ENCODE measurements at regions of chr1 and their contacts with region 1.

Region 1: DNA sequence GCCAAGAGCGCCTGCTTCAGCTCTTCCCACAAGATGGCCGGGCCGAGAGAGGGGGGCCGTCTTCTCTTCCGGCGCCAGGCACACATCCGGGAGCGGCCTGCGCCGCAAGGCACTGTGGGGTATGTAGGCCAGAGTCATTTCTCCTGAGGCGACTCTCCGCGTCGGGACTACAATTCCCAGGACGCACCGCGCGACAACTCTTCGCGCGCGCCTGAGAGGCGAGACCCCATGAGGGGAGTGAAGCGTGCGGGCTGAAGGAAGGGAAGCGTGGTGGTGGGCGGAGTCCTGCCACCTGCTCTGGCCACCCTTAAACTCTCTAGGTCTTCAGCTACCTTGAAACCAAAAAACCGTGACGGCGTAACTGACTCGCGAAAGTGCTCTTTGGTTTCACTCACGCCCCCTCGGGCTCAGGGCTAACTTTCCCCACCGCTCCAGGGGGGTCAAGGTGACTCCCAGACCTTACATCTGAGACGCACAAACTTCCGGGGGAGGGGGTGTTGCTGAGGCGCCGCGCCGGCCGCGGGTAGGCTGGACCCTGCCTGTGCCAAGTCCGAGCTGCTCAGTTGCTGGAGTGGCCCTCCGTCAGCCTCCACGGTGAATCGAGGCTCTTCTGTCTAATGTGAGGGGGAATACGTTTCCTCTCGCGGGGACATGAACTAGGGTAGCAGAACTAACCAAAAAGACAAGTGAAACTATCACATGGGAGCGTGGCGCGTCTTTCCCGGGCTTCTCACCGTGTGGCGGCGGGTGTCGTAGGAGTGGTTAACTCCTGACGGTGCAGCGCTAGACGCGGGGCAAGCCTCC is at the start of gene SERBP1:
- DNase-seq: peak; percentile 89 to 99 (median 95)
- ATAC-seq: peak; percentile 84
- H3K4me3 ChIP-seq: peak within 1 kb of the TSS; percentile 86 to 94
- H3K4me3 Mint-ChIP-seq: peak within 1 kb of the TSS; percentile 92
- H3K27ac ChIP-seq: peak within 1 kb of the TSS; percentile 86 to 98
- H3K27ac Mint-ChIP-seq: peak within 1 kb of the TSS; percentile 95
- H3K4me1 ChIP-seq: peaks cover 31% of the 10 kb centered on the region
- H3K4me1 Mint-ChIP-seq: peaks cover 54% of the 10 kb centered on the region
- H3K27me3 ChIP-seq: no peaks in the 10 kb centered on the region
- H3K27me3 Mint-ChIP-seq: no peaks in the 10 kb centered on the region
- CTCF ChIP-seq: no peak
- total RNA-seq, gene SERBP1: 136 to 143 TPM

Region 2: DNA sequence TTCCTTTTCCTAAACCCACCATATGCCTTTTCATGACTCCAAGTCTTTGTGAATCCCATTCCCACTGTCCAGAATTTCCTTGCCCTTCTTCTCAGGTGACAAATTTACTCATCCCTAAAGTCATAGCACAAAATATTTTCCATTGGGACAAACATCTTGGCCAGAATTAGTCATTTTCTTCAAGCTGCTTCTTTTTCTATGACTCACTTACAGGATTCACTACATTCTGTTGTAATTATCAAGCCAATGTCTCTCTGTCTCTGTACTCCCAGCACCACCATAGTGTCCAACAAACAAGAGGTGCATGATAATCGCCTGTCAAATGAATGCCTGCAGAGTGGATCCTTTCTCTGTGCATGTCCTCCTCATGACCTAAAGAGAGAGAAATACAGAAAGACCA is 858.8 kb before region 1 on chr1:
- CTCF ChIA-PET with region 1: no interaction called
- POLR2A ChIA-PET with region 1: no interaction called
- intact Hi-C with region 1: no loop called
- DNase-seq: no peak
- ATAC-seq: no peak
- H3K4me3 ChIP-seq: no peak overlapping the region
- H3K4me3 Mint-ChIP-seq: no peak overlapping the region
- H3K27ac ChIP-seq: no peak overlapping the region
- H3K27ac Mint-ChIP-seq: no peak overlapping the region
- H3K4me1 ChIP-seq: no peaks in the 10 kb centered on the region
- H3K4me1 Mint-ChIP-seq: no peaks in the 10 kb centered on the region
- H3K27me3 ChIP-seq: no peaks in the 10 kb centered on the region
- H3K27me3 Mint-ChIP-seq: no peaks in the 10 kb centered on the region
- CTCF ChIP-seq: no peak

Region 3: GRCh38 chr1:66924756-66925557 is 505.6 kb before region 1 on chr1 and contains the starts of genes DNAI4 and MIER1:
- CTCF ChIA-PET with region 1: no interaction called
- POLR2A ChIA-PET with region 1: interaction called, 4 read pairs
- intact Hi-C with region 1: loop called (anchors 1 to 2 kb)
- DNase-seq: peak; percentile 93 to 98 (median 96)
- ATAC-seq: peak; percentile 91
- H3K4me3 ChIP-seq: peak within 1 kb of the TSS; percentile 80 to 99
- H3K4me3 Mint-ChIP-seq: peak within 1 kb of the TSS; percentile 96
- H3K27ac ChIP-seq: peak within 1 kb of the TSS; percentile 95 to 100
- H3K27ac Mint-ChIP-seq: peak within 1 kb of the TSS; percentile 93
- H3K4me1 ChIP-seq: peaks cover 25% of the 10 kb centered on the region
- H3K4me1 Mint-ChIP-seq: peaks cover 46% of the 10 kb centered on the region
- H3K27me3 ChIP-seq: no peaks in the 10 kb centered on the region
- H3K27me3 Mint-ChIP-seq: no peaks in the 10 kb centered on the region
- CTCF ChIP-seq: no peak
- total RNA-seq, gene DNAI4: 4.9 to 5.1 TPM
- total RNA-seq, gene MIER1: 94.5 to 96.5 TPM

Region 4: GRCh38 chr1:67053785-67054772 is 376.5 kb before region 1 on chr1 and contains the start of gene SLC35D1:
- CTCF ChIA-PET with region 1: no interaction called
- POLR2A ChIA-PET with region 1: interaction called, 4 read pairs
- intact Hi-C with region 1: loop called (anchors 2 kb)
- DNase-seq: peak; percentile 62 to 87 (median 83)
- ATAC-seq: peak; percentile 78
- H3K4me3 ChIP-seq: peak within 1 kb of the TSS; percentile 80 to 85
- H3K4me3 Mint-ChIP-seq: peak within 1 kb of the TSS; percentile 89
- H3K27ac ChIP-seq: peak within 1 kb of the TSS; percentile 90 to 96
- H3K27ac Mint-ChIP-seq: peak within 1 kb of the TSS; percentile 96
- H3K4me1 ChIP-seq: peaks cover 10% of the 10 kb centered on the region
- H3K4me1 Mint-ChIP-seq: peaks cover 35% of the 10 kb centered on the region
- H3K27me3 ChIP-seq: no peaks in the 10 kb centered on the region
- H3K27me3 Mint-ChIP-seq: no peaks in the 10 kb centered on the region
- CTCF ChIP-seq: no peak
- total RNA-seq, gene SLC35D1: 18.4 to 18.5 TPM

Region 5: DNA sequence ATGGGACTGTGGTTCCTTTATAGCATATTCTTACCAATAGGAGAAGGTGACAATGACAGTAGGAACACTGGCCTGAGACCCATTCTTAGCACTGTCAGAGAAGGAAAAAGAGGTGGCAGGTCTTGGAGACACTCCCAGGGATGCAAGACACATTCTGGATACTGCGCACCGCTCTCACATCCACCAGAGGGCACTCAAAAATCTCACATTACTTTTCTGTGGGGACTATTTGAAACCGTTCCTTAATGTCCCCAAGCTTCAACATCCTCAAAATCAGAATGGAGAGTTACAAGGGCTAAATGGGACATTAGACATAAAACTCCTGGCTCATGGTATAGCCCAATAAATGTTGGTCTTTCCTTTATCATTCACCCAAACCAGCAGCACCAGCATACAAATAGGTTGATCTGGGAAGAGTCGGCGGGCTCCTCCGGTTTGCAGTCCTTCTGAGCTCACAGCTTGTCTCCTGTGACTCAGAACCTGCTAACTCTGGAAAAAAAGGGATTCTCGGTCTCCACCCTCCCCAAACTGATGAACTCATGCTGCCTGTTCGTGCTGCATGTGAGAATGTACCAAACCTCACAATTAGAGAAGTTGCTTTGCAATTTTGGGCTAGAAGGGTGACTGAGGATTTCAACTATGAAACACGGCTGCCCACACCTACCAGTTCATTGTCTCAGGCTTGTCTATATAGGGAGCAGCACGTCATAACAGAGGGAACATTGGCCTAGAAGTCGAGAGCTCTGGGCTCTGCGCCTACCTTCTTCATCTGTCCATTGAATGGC is 82.7 kb before region 1 on chr1:
- CTCF ChIA-PET with region 1: no interaction called
- POLR2A ChIA-PET with region 1: no interaction called
- intact Hi-C with region 1: loop called in 1 of 2 experiments (anchors 10 kb)
- DNase-seq: peak in 2 of 9 experiments; percentile 26 to 44
- ATAC-seq: no peak
- H3K4me3 ChIP-seq: no peak overlapping the region
- H3K4me3 Mint-ChIP-seq: no peak overlapping the region
- H3K27ac ChIP-seq: no peak overlapping the region
- H3K27ac Mint-ChIP-seq: no peak overlapping the region
- H3K4me1 ChIP-seq: no peaks in the 10 kb centered on the region
- H3K4me1 Mint-ChIP-seq: peaks cover 8% of the 10 kb centered on the region
- H3K27me3 ChIP-seq: no peaks in the 10 kb centered on the region
- H3K27me3 Mint-ChIP-seq: no peaks in the 10 kb centered on the region
- CTCF ChIP-seq: peak; percentile 31

Region 6: DNA sequence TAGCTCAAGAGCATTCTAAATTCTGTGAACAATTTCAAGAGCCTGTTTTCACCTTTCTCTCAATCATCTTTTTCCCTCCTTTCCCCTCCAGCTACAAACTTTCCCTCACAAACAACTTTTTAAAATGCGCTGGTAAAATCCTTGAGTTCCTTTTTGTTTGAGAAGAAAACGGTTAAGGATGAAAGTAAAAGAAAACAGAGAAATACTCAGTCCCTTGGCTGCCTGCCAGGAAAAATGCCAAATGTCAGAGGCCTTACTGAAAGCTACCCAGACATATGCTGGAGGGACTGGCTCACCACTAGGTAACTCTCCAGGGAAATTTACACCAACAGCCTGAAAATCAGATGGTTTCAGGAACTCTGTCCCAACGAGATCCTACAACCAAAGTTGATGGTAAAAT is 10.6 kb after region 1 on chr1:
- CTCF ChIA-PET with region 1: interaction called, 4 read pairs
- POLR2A ChIA-PET with region 1: interaction called, 11 read pairs
- intact Hi-C with region 1: no loop called
- DNase-seq: peak in 3 of 9 experiments; percentile 16 to 20 (median 18)
- ATAC-seq: no peak
- H3K4me3 ChIP-seq: no peak overlapping the region
- H3K4me3 Mint-ChIP-seq: no peak overlapping the region
- H3K27ac ChIP-seq: no peak overlapping the region
- H3K27ac Mint-ChIP-seq: no peak overlapping the region
- H3K4me1 ChIP-seq: no peaks in the 10 kb centered on the region
- H3K4me1 Mint-ChIP-seq: no peaks in the 10 kb centered on the region
- H3K27me3 ChIP-seq: no peaks in the 10 kb centered on the region
- H3K27me3 Mint-ChIP-seq: no peaks in the 10 kb centered on the region
- CTCF ChIP-seq: no peak

Region 7: GRCh38 chr1:67685067-67685557 is 254.6 kb after region 1 on chr1 and contains the start of gene GADD45A:
- CTCF ChIA-PET with region 1: no interaction called
- POLR2A ChIA-PET with region 1: interaction called, 11 read pairs
- intact Hi-C with region 1: loop called (anchors 1 to 5 kb)
- DNase-seq: peak; percentile 85 to 98 (median 93)
- ATAC-seq: peak; percentile 85
- H3K4me3 ChIP-seq: peak within 1 kb of the TSS; percentile 79 to 88
- H3K4me3 Mint-ChIP-seq: peak within 1 kb of the TSS; percentile 100
- H3K27ac ChIP-seq: peak within 1 kb of the TSS; percentile 61 to 66
- H3K27ac Mint-ChIP-seq: peak within 1 kb of the TSS; percentile 96
- H3K4me1 ChIP-seq: peaks cover 16% of the 10 kb centered on the region
- H3K4me1 Mint-ChIP-seq: peaks cover 25% of the 10 kb centered on the region
- H3K27me3 ChIP-seq: no peaks in the 10 kb centered on the region
- H3K27me3 Mint-ChIP-seq: no peaks in the 10 kb centered on the region
- CTCF ChIP-seq: no peak
- total RNA-seq, gene GADD45A: 194 to 196 TPM

Measured in CD8-positive, alpha-beta T cell (primary cell).